Endothelial cell of umbilical vein (primary cell): ENCODE measurements at regions of chr11 and their contacts with region 1.

Region 1: DNA sequence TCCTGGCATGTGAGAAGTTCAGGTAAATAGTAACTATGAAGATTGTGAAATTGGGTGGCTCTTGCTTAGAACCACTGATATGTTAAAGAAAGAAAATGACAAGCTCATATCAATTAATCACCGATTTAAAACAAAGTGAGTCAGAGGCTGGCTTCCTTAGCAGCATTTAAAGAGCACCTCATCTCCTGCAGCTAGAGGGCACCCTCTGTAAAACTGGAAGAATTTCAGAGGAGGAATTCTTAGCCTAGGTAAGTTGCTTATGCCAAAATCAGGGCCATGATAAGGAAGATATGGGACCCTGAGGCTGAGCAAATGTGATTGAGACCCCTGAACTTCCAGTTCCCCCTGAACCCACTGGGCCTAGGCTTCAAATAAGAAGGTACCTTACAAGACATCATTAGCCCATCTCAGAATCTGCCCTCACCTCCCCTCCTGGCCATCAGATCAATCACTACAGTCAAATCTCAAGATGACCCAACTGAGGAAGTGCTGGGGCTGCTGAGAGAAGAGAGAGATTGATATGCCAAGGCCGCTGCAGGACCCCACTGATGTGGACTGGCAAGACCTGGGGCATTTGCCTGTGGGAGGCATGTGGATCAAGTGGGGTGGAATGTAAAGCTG is 8.6 kb upstream of the CD3E start:
- DNase-seq: peak; percentile 59
- H3K4me3 ChIP-seq: no peak overlapping the region
- H3K27ac ChIP-seq: no peak overlapping the region
- H3K4me1 ChIP-seq: no peaks in the 10 kb centered on the region
- H3K27me3 ChIP-seq: peaks cover 1 to 5% of the 10 kb centered on the region in 2 experiments
- CTCF ChIP-seq: peak; percentile 52 to 63
- POLR2A ChIP-seq: no peak

Region 2: GRCh38 chr11:118311518-118311917 is 15.6 kb after region 1 on chr11:
- CTCF ChIA-PET with region 1: interaction called, 15 read pairs
- POLR2A ChIA-PET with region 1: no interaction called
- dilution Hi-C with region 1: no loop called
- intact Hi-C with region 1: no loop called
- DNase-seq: no peak
- H3K4me3 ChIP-seq: no peak overlapping the region
- H3K27ac ChIP-seq: no peak overlapping the region
- H3K4me1 ChIP-seq: no peaks in the 10 kb centered on the region
- H3K27me3 ChIP-seq: peaks cover 7 to 12% of the 10 kb centered on the region in 2 experiments
- CTCF ChIP-seq: no peak
- POLR2A ChIP-seq: no peak

Region 3: DNA sequence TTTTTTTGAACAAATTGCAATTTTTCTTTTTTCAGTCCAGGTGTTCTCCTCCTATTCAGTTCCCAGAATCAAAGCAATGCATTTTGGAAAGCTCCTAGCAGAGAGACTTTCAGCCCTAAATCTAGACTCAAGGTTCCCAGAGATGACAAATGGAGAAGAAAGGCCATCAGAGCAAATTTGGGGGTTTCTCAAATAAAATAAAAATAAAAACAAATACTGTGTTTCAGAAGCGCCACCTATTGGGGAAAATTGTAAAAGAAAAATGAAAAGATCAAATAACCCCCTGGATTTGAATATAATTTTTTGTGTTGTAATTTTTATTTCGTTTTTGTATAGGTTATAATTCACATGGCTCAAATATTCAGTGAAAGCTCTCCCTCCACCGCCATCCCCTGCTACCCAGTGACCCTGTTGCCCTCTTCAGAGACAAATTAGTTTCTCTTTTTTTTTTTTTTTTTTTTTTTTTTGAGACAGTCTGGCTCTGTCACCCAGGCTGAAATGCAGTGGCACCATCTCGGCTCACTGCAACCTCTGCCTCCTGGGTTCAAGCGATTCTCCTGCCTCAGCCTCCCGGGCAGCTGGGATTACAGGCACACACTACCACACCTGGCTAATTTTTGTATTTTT is 57.3 kb after region 1 on chr11:
- CTCF ChIA-PET with region 1: interaction called, 17 read pairs
- POLR2A ChIA-PET with region 1: no interaction called
- dilution Hi-C with region 1: no loop called
- intact Hi-C with region 1: loop called (anchors 2 kb)
- DNase-seq: peak; percentile 25
- H3K4me3 ChIP-seq: no peak overlapping the region
- H3K27ac ChIP-seq: no peak overlapping the region
- H3K4me1 ChIP-seq: no peaks in the 10 kb centered on the region
- H3K27me3 ChIP-seq: peaks cover 6 to 13% of the 10 kb centered on the region in 2 experiments
- CTCF ChIP-seq: peak; percentile 33 to 38
- POLR2A ChIP-seq: no peak

Region 4: DNA sequence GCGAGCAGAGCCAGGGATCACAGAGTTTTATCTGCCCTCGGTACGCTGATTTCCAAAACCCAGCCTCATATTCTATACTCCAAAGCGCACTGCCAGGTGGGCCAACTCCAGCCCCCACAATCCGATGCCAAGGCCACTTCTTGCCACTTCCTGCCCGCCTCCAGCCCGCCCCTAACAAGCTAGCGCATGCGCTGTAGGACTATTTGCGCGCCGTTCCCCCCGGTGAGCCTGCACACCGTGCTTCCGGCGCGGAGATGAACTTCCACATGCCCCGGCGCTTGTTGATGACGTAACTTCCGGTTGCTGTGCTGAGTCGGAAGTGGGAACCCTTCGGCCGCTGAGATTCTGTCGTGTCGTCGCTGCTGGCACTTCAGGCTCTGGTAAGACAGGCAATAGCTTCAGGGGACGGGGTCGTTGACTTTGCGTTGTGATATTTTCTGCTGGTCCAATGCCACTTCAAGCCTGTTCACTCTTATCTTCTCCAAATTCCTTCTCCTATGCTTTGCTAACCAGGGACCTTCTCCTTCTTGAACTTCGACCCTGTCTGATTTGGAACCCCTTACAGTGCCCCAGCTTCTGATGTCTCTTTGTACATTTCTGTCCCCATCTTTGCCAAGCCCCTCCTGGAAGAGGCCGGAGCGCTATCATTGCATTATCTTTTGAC is 63.5 kb after region 1 on chr11 and contains the start of gene UBE4A:
- CTCF ChIA-PET with region 1: interaction called, 14 read pairs
- POLR2A ChIA-PET with region 1: no interaction called
- dilution Hi-C with region 1: no loop called
- intact Hi-C with region 1: no loop called
- DNase-seq: peak; percentile 84
- H3K4me3 ChIP-seq: peak within 1 kb of the TSS; percentile 20 to 71 (median 48)
- H3K27ac ChIP-seq: no peak within 1 kb of the TSS
- H3K4me1 ChIP-seq: peaks cover 6% of the 10 kb centered on the region
- H3K27me3 ChIP-seq: no peaks in the 10 kb centered on the region
- CTCF ChIP-seq: no peak
- POLR2A ChIP-seq: peak; percentile 97
- total RNA-seq, gene UBE4A: 34.9 and 40.2 TPM in 2 replicates